Vagina (tissue), 2 donors: ENCODE measurements at regions of chr2 and their contacts with region 1.

Region 1: GRCh38 chr2:774436-774835 is 97.2 kb upstream of the TMEM18 start:
- DNase-seq: peak in 1 of 2 donors; percentile 91
- H3K4me3 ChIP-seq: no peak overlapping the region
- H3K27ac ChIP-seq: no peak overlapping the region
- H3K4me1 ChIP-seq: no peaks in the 10 kb centered on the region
- H3K27me3 ChIP-seq: no peaks in the 10 kb centered on the region
- CTCF ChIP-seq: no peak
- POLR2A ChIP-seq: no peak

Region 2: DNA sequence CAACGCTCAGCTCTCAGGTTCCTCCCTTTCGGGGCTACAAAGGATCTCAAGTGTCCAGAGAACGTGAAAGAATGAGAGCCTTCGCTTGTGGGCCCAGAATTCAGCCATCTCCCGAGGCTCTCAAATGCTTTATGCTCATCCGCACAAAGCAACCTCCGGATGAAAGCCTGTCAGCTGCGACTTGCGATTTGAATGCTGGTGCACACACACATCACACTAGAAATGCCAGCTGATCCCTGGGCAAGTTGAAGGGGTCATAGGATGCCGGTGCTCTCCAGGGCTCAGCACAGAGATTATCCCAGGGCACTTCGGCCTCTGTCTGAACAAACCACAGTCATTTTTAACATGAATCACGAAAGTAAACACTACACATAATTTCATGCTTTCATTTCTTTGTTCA is 1698.4 kb after region 1 on chr2:
- intact Hi-C with region 1: loop called (anchors 10 kb)
- DNase-seq: no peak
- H3K4me3 ChIP-seq: no peak overlapping the region
- H3K27ac ChIP-seq: no peak overlapping the region
- H3K4me1 ChIP-seq: no peaks in the 10 kb centered on the region
- H3K27me3 ChIP-seq: no peaks in the 10 kb centered on the region
- CTCF ChIP-seq: no peak
- POLR2A ChIP-seq: no peak